ENCODE measurements at regions of chr12 and their contacts with region 1.

Region 1: GRCh38 chr12:460301-461230 is 827 bp downstream of the B4GALNT3 start:
- DNase-seq: peak; percentile 52
- ATAC-seq: peak; percentile 82
- H3K4me3 Mint-ChIP-seq: peak overlapping the region; percentile 73
- H3K27ac Mint-ChIP-seq: no peak overlapping the region
- H3K4me1 Mint-ChIP-seq: peaks cover 9% of the 10 kb centered on the region
- H3K27me3 Mint-ChIP-seq: peaks cover 71% of the 10 kb centered on the region

Region 2: DNA sequence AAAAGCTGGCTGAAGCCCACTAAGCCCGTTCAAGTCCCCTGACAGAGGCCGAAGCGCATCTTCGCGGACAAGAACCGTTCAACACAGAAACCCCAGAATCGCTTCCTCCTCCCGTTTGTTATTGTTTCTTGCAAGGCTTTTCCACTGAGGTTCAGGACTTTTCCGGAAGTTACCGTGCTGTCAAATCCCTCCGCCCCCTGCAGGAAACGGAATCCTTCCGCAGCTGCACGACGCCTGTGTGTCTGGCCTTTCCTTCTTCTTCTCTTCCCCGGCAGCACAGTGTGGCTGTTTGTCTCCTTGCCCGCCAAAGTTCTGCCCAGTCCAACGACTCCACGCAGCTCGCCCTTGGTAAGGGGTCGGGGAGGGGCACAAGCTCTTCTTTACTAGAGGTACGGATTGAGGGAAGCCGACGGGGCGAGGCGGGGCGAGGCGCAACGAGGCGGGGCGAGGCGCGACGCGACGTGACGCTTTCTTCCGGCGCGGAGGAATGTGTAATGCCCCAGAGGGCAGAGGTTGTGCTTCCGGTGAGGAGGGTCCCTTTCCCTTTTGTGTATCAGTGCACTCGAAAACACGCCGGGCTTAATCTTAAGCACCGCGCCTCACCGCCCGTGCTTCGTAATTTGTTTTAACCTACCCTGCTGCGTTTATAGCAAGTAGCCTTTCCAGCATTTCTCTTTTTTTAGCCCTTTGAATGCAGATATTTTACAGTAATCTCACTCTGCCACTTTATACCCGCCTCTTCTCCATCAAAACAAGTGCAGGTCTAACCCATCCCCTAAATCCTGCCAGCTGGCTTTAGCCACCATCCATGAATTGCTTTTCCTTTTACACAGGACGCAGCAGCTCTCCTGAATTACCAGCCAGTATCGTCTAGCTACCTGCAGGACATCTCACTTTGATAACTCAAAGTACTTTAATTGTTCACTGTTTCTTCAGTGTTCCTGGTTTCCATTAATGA is 71.1 kb before region 1 on chr12 and contains the start of gene KDM5A:
- CTCF ChIA-PET with region 1: no interaction called
- POLR2A ChIA-PET with region 1: no interaction called
- DNase-seq: peak; percentile 94
- ATAC-seq: peak; percentile 92
- H3K4me3 Mint-ChIP-seq: peak within 1 kb of the TSS; percentile 89
- H3K27ac Mint-ChIP-seq: peak within 1 kb of the TSS; percentile 98
- H3K4me1 Mint-ChIP-seq: peaks cover 33% of the 10 kb centered on the region
- H3K27me3 Mint-ChIP-seq: no peaks in the 10 kb centered on the region
- total RNA-seq, gene KDM5A: 81.5 to 87.7 TPM

Region 3: DNA sequence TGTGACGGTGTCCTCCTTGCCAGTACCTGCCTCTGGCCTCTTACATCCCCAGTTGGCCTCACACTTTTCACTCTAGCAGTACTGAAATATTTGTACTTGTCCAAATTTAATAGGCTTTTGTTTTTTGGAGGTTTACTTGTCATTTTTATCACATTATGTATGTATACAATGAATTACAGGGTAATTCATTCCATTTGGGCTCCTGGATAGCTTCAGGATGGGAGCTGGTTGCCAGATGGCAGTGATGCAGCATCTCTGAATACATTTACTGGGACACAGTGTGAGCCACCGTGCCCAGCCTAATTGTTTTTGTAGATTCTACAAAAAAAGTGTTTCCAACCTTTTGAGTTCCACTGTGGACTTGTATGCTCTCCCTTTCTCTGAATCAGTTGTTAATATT is 45.7 kb before region 1 on chr12:
- CTCF ChIA-PET with region 1: no interaction called
- POLR2A ChIA-PET with region 1: no interaction called
- DNase-seq: no peak
- ATAC-seq: no peak
- H3K4me3 Mint-ChIP-seq: no peak overlapping the region
- H3K27ac Mint-ChIP-seq: no peak overlapping the region
- H3K4me1 Mint-ChIP-seq: no peaks in the 10 kb centered on the region
- H3K27me3 Mint-ChIP-seq: no peaks in the 10 kb centered on the region

Region 4: GRCh38 chr12:546921-547845 is 86.6 kb after region 1 on chr12:
- CTCF ChIA-PET with region 1: interaction called, 81 read pairs
- POLR2A ChIA-PET with region 1: no interaction called
- DNase-seq: peak; percentile 76
- ATAC-seq: peak; percentile 82
- H3K4me3 Mint-ChIP-seq: no peak overlapping the region
- H3K27ac Mint-ChIP-seq: no peak overlapping the region
- H3K4me1 Mint-ChIP-seq: peaks cover 50% of the 10 kb centered on the region
- H3K27me3 Mint-ChIP-seq: peaks cover 22% of the 10 kb centered on the region

Region 5: GRCh38 chr12:642633-643474 is 182.3 kb after region 1 on chr12:
- CTCF ChIA-PET with region 1: no interaction called
- POLR2A ChIA-PET with region 1: no interaction called
- DNase-seq: peak; percentile 84
- ATAC-seq: peak; percentile 86
- H3K4me3 Mint-ChIP-seq: peak overlapping the region; percentile 83
- H3K27ac Mint-ChIP-seq: peak overlapping the region; percentile 94
- H3K4me1 Mint-ChIP-seq: peaks cover 60% of the 10 kb centered on the region
- H3K27me3 Mint-ChIP-seq: no peaks in the 10 kb centered on the region